ENCODE measurements at regions of chr16 and their contacts with region 1.

Region 1: DNA sequence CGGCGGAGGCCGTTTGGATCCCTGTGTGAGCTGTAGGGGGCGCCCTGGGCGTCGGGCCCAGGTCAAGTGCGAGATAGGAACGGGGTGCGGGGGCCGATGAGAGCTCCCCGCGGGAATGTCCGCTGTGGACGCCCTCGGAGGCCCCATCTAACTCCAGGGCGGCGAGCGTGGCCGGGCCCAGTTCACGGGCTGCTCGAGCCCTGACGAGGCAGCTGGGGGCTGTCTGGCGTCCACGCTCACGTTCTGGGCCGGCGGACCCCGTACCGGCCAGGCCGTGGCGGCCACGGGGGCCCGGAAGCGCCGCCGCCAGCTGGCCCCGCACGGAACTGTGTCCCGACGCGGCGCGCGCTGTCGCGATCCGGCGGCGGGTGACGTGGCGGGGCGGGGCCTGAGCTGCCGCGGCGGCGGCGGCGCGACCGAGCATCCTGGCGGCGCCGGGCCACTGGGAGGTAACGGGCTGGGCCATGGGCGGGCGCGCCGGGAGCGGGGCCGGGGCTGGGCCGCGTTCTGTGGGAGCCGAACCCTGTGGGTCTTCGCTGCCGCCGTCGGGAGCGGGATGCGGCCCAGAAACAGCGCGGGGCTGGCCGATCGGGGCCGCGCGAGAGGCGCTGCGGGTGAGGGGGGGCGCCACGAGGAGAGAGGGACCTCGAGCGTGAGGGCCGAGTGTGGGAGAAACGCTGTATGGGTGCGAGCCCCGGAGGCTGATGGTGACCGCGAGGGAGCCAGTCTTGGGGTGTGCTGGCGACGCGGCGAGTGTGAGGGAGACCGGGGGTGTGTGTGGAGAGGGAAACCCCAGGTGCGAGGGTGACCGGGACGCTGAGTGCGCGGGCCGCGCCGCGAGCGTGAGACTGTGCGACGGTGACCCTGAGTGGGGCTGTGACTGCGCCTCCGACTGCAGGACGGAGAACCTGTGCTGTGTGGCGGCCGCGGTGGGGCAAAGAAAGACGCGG is at the start of gene SLC7A6:
- DNase-seq: peak; percentile 74 to 85 (median 82)
- H3K4me3 ChIP-seq: peak within 1 kb of the TSS; percentile 61 to 88 (median 79)
- H3K27ac ChIP-seq: peak within 1 kb of the TSS; percentile 47 to 68
- H3K4me1 ChIP-seq: peaks cover 0 to 41% (median 31%) of the 10 kb centered on the region in 4 experiments
- H3K27me3 ChIP-seq: no peaks in the 10 kb centered on the region

Region 2: GRCh38 chr16:68237243-68238028 is 27.0 kb before region 1 on chr16:
- CTCF ChIA-PET with region 1: interaction called, 92 read pairs
- POLR2A ChIA-PET with region 1: no interaction called
- DNase-seq: peak; percentile 85 to 91 (median 91)
- H3K4me3 ChIP-seq: peak overlapping the region; percentile 56 to 86 (median 67)
- H3K27ac ChIP-seq: no peak overlapping the region
- H3K4me1 ChIP-seq: peaks cover 0 to 45% (median 41%) of the 10 kb centered on the region in 4 experiments
- H3K27me3 ChIP-seq: peaks cover 0 to 15% (median 8%) of the 10 kb centered on the region in 5 experiments

Region 3: DNA sequence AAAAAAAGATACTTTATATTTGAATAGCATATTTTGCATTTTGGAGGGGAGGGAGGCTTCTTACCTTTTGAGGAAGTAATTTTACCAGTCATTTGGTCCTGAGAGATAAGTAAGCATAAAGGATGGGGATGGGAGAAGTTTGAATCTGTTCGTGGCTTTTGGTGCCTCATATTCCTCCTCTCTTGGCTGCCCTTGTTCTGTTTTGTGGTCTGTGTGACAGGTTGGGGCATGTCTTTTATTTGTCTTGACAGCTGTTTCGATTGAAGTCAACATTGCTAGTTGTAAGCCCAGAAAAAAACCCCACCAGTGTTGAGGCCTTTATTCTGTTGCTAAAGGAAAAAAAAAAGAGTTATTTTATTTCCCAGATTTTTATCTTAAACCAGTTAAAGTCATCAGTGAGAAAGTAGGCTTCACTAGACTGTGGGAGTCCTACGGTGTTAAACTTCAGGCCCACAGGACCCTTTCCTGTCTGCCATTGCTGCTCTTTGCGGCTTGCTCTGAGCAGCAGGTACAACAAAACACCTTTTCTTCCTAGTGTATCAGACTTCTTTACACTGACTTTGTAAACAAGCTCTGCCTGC is 11.3 kb after region 1 on chr16:
- CTCF ChIA-PET with region 1: interaction called, 79 read pairs
- POLR2A ChIA-PET with region 1: interaction called, 5 read pairs
- DNase-seq: peak in 2 of 3 donors; percentile 70 to 81
- H3K4me3 ChIP-seq: peak overlapping the region in 1 of 7 experiments; percentile 33
- H3K27ac ChIP-seq: peak overlapping the region in 1 of 2 experiments; percentile 39
- H3K4me1 ChIP-seq: peaks cover 11 to 39% (median 29%) of the 10 kb centered on the region in 4 experiments
- H3K27me3 ChIP-seq: no peaks in the 10 kb centered on the region

Region 4: GRCh38 chr16:68298907-68299561 is 34.6 kb after region 1 on chr16:
- CTCF ChIA-PET with region 1: interaction called, 34 read pairs
- POLR2A ChIA-PET with region 1: no interaction called
- DNase-seq: no peak
- H3K4me3 ChIP-seq: no peak overlapping the region
- H3K27ac ChIP-seq: no peak overlapping the region
- H3K4me1 ChIP-seq: peaks cover 0 to 20% (median 1%) of the 10 kb centered on the region in 4 experiments
- H3K27me3 ChIP-seq: no peaks in the 10 kb centered on the region

Region 5: GRCh38 chr16:68328151-68328859 is 63.9 kb after region 1 on chr16:
- CTCF ChIA-PET with region 1: interaction called, 262 read pairs
- POLR2A ChIA-PET with region 1: interaction called, 9 read pairs
- DNase-seq: peak; percentile 87 to 93 (median 91)
- H3K4me3 ChIP-seq: no peak overlapping the region
- H3K27ac ChIP-seq: no peak overlapping the region
- H3K4me1 ChIP-seq: peaks cover 5 to 28% (median 22%) of the 10 kb centered on the region in 4 experiments
- H3K27me3 ChIP-seq: no peaks in the 10 kb centered on the region

Measured in common myeloid progenitor, CD34-positive (primary cell).